Common myeloid progenitor, CD34-positive (primary cell): ENCODE measurements at regions of chr4 and their contacts with region 1.

Region 1: DNA sequence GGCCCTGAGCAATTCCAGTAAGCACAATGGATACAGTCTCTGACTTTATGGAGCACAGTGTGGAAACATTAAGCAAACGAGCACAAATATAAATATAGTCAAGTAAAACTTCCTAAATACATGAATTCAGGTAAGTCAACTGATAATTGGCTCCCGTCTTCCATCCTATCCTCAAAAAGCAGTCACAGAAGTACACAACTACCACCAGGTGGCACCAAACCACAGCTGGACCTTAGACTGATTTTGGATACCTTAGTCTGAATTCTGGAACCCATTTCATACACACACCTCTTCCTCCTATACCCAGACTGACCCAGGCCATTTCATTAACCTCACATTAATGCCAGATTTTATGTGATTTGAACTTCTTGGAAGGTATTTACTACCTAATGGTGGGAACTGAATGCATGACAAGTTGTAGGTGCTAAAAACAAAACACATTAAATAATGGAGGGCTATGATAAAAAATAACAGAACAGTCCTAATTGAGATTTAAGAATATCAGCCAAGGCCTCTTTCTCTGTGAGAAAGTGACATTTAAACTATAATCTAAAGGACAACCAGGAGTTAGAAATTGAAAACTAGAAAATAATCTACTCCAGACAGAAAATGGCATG is 77.5 kb downstream of the ELF2 start:
- DNase-seq: peak; percentile 86 to 95 (median 91)
- H3K4me3 ChIP-seq: no peak overlapping the region
- H3K27ac ChIP-seq: no peak overlapping the region
- H3K4me1 ChIP-seq: peaks cover 0 to 2% (median 0%) of the 10 kb centered on the region in 4 experiments
- H3K27me3 ChIP-seq: no peaks in the 10 kb centered on the region

Region 2: DNA sequence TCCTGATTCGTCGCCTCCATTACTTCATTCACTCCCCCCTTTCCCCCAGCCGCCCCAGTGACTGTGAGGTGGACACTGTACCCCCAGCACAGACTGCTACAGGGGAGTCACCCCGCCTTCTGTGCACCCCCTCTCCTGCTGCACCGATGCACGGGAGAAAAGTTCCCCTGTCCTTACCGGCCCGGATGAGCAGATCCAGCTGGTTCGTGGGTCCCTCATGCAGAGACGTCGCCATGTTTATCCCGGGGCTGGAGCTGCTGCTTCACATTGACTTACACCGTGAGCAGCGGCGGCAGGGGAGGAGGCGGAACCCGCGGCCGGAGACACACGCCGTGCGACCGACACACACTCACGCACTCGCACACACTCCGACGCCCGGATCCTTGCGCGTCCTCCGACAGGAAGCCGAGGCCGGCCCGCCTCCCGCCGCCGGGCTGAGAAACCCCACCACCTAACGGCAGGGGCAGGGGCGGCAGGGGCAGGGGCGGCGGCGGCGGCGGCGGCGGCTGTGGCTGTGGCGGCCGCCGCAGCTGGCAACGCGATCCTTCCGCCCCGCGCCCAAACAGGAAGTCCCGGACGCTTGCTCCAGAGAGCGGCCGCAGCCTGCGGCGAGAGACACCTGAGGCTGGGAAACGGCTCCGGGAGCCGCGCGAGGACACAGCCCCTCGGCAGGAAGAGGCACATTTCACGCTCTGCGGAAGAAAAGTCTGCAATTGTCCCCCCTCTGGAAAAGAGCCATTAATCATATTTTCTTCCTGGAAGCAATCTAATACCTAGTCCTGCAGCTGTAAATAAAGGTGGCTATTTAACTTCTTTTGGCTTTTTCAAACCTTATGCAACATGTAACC is 15.3 kb before region 1 on chr4:
- CTCF ChIA-PET with region 1: interaction called, 33 read pairs
- POLR2A ChIA-PET with region 1: no interaction called
- DNase-seq: peak; percentile 94 to 98 (median 96)
- H3K4me3 ChIP-seq: peak overlapping the region; percentile 56 to 100 (median 93)
- H3K27ac ChIP-seq: peak overlapping the region; percentile 78 to 94
- H3K4me1 ChIP-seq: peaks cover 15 to 47% (median 30%) of the 10 kb centered on the region in 4 experiments
- H3K27me3 ChIP-seq: no peaks in the 10 kb centered on the region

Region 3: GRCh38 chr4:139112650-139113049 is 13.2 kb after region 1 on chr4:
- CTCF ChIA-PET with region 1: interaction called, 14 read pairs
- POLR2A ChIA-PET with region 1: no interaction called
- DNase-seq: no peak
- H3K4me3 ChIP-seq: no peak overlapping the region
- H3K27ac ChIP-seq: no peak overlapping the region
- H3K4me1 ChIP-seq: no peaks in the 10 kb centered on the region
- H3K27me3 ChIP-seq: no peaks in the 10 kb centered on the region

Region 4: GRCh38 chr4:139123910-139124309 is 24.4 kb after region 1 on chr4:
- CTCF ChIA-PET with region 1: interaction called, 15 read pairs
- POLR2A ChIA-PET with region 1: no interaction called
- DNase-seq: no peak
- H3K4me3 ChIP-seq: no peak overlapping the region
- H3K27ac ChIP-seq: no peak overlapping the region
- H3K4me1 ChIP-seq: no peaks in the 10 kb centered on the region
- H3K27me3 ChIP-seq: no peaks in the 10 kb centered on the region

Region 5: DNA sequence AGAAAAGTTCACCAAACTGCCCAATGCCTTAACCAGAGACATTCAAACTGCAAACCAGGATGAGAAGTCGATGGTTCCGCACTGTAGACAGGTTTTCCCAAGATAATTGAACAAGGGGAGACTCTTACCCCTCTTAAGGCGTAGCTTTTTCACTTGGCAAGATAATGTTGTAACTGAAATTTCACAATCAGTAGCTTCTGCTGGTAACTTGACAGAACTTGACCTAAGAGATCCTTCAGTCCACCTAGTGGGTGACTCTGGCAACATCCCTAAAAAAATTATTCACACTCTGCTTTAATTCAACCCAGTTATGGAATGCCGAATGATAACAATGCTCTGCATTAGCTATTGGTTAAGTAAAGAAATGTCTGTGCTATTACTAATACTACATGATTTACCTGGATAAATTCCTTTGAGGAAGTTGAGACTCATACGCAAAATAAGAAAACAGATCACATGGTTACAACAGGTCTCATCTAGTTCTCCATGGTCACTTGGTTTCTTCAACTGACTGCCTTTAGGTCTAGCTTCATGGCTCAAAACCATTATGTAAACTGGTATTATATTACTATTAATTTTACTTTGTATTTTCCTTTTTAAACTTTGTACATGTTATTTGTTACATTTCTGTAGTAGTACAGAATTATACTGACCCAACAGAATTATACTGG is 68.4 kb after region 1 on chr4:
- CTCF ChIA-PET with region 1: interaction called, 16 read pairs
- POLR2A ChIA-PET with region 1: no interaction called
- DNase-seq: peak; percentile 57 to 73 (median 71)
- H3K4me3 ChIP-seq: no peak overlapping the region
- H3K27ac ChIP-seq: peak overlapping the region in 1 of 2 experiments; percentile 53
- H3K4me1 ChIP-seq: peaks cover 0 to 32% (median 18%) of the 10 kb centered on the region in 4 experiments
- H3K27me3 ChIP-seq: no peaks in the 10 kb centered on the region